Mammary epithelial cell (primary cell): ENCODE measurements at regions of chr18 and their contacts with region 1.

Region 1: DNA sequence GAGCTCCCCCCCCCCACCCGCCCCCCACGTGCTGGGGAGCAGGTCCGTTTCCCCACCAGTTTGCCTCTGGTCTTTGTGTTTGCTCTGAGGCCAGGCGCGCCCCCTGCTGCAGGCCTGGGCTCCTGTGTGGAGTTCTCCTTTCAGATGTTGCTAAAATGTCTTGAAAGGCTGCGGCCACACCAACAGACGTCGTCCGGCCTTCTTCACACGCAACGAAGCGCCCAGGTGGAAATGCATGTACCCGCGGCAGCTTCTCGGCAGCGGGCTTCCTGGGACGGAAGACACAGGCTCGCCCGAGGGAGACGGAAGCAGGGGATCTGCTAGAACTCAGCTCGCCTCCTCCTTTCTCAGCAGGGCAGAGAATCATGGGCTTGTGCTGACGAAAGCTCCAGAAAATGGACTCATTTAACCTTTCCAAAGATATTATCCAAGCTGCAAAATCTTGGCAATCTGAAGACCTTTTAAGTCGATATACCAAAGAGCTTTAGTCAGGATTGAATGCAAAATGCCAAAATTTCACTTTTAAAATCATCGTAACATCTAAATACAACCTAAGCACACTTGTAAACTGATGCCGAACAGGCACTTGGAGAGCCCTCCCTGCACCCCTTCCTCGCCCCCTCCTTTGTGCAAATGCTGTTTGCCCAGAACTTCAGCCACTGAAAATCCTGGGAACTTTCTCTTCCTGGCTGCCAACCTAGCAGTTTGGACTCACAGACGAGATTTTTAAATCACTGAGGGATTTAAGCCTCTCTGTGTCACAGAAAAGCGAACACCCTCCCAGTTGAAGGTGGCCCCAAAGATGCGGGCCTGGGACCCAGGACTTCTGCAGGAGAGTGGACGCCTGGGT is 125.5 kb upstream of the ZNF516 start:
- DNase-seq: peak; percentile 74
- H3K4me3 ChIP-seq: peak overlapping the region in 2 of 3 experiments; percentile 36
- H3K27ac ChIP-seq: peak overlapping the region; percentile 61
- H3K4me1 ChIP-seq: peaks cover 41% of the 10 kb centered on the region
- H3K27me3 ChIP-seq: no peaks in the 10 kb centered on the region
- CTCF ChIP-seq: peak; percentile 46 to 78

Region 2: DNA sequence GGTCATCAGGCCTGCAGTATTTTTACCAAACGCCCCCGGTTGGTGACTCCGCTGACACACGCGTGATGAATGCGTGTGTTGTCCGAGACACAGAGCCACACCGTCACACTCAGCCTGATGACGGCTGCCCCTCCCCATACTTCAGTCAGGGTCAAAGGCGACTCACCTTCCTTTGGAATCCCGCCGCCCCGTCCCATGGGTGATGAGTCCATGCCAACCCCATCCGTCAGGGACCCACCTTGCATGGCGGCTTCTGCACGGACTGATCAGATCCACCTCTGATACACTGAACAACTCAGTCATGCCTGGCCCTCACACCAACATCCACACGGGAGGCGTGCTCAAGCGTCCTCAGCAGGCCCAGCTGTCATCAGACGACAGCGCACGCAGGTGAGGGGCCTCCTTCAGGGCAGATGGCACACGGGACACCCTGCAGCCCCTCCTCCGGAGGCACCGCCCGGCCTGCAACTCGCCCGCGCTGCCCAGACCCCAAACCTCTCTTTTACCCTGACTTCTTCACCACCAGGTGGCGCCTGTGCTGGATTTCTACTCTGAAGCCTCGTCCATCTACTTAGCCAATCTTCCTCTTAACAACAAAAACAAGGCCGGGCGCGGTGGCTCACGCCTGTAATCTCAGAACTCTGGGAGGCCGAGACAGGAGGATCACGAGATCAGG is 214.7 kb before region 1 on chr18:
- CTCF ChIA-PET with region 1: no interaction called
- dilution Hi-C with region 1: no loop called
- in situ Hi-C with region 1: no loop called
- intact Hi-C with region 1: loop called (anchors 1 kb)
- DNase-seq: peak; percentile 27
- H3K4me3 ChIP-seq: no peak overlapping the region
- H3K27ac ChIP-seq: no peak overlapping the region
- H3K4me1 ChIP-seq: no peaks in the 10 kb centered on the region
- H3K27me3 ChIP-seq: no peaks in the 10 kb centered on the region
- CTCF ChIP-seq: peak; percentile 46 to 67

Region 3: GRCh38 chr18:76492669-76493212 is 127.8 kb before region 1 on chr18:
- CTCF ChIA-PET with region 1: no interaction called
- dilution Hi-C with region 1: loop called (anchors 5 kb)
- in situ Hi-C with region 1: loop called in 1 of 2 experiments (anchors 25 kb)
- intact Hi-C with region 1: loop called (anchors 1 kb)
- DNase-seq: peak; percentile 98
- H3K4me3 ChIP-seq: peak overlapping the region; percentile 83 to 94 (median 92)
- H3K27ac ChIP-seq: peak overlapping the region; percentile 77
- H3K4me1 ChIP-seq: peaks cover 20% of the 10 kb centered on the region
- H3K27me3 ChIP-seq: no peaks in the 10 kb centered on the region
- CTCF ChIP-seq: no peak

Region 4: DNA sequence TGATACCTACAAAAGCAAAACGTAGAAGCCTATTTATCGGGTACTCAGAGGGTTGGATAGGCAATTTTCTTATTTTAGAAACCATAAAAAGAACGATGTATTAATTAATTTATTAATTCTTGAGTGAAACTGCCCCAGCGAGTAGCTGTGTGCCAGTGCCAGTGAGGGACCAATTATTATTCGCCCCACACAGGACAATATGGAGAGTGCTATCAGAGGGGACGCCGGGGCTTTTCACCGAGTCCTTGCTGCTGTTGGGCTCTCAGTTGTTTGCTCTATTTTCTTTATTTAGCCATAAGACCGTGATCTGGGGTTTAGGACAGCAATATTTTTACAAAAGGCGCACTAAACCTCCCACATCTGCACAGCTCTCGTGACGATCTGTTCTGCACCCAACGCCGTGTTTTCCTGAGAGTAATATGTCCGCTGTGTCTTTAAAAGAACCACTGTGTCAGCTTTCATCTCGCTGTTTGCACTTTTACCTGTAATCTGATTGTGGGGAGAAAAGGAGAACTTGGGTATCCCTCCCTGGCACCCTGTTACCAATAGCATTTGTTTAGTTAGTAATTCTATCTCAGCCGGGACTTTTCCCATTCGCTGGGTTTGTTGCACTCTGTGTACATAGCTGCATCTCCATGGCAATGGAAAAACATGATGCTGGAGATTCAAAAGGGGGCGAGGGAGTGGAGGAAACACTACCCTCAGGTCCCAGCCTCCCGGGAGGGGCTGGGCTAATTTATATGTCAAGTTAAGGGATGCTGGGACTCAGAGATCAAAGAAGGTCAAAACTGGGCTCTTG is 95.4 kb before region 1 on chr18:
- CTCF ChIA-PET with region 1: no interaction called
- dilution Hi-C with region 1: no loop called
- in situ Hi-C with region 1: no loop called
- intact Hi-C with region 1: no loop called
- DNase-seq: peak; percentile 37
- H3K4me3 ChIP-seq: peak overlapping the region; percentile 35 to 56 (median 52)
- H3K27ac ChIP-seq: peak overlapping the region; percentile 49
- H3K4me1 ChIP-seq: peaks cover 11% of the 10 kb centered on the region
- H3K27me3 ChIP-seq: no peaks in the 10 kb centered on the region
- CTCF ChIP-seq: no peak

Region 5: DNA sequence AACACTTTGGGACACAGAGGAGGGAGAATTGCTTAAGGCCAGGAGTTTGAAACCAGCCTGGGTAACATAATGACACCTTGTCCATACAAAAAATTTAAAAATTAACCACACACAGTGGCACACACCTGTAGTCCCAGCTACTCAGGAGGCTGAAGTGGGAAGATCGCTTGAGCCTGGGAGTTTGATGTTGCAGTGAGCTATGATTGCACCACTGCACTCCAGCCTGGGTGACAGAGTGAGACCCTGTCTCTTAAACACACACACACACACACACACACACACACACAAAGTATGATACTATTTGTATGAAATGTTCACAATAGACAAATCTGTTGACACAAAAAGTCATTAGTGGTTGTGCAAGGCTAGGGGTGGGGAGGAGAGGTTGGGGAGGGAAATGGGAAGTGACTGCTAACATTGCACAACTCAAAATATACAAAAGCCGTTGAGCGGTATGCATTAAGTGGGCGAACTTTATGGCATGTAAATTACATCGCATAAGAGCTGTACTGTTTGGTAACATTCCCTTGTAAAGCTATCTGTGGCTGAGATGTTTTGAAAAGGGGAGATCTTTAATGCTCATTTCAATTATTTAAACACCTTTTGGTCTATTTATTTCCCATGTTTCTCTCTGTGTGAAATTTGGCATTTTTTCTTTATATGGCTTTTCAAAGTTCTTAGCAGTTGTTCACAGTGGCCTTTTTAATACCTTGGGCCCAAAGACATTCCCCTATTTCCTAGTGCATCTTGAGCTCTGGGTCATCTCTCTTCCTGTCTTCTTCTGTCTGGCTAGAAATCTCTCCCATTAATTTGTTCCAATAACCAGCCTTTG is 66.6 kb before region 1 on chr18:
- CTCF ChIA-PET with region 1: no interaction called
- dilution Hi-C with region 1: no loop called
- in situ Hi-C with region 1: no loop called
- intact Hi-C with region 1: no loop called
- DNase-seq: peak; percentile 42
- H3K4me3 ChIP-seq: no peak overlapping the region
- H3K27ac ChIP-seq: no peak overlapping the region
- H3K4me1 ChIP-seq: peaks cover 3% of the 10 kb centered on the region
- H3K27me3 ChIP-seq: no peaks in the 10 kb centered on the region
- CTCF ChIP-seq: no peak

Region 6: GRCh38 chr18:76573325-76574025 is 47.1 kb before region 1 on chr18:
- CTCF ChIA-PET with region 1: no interaction called
- dilution Hi-C with region 1: loop called (anchors 5 kb)
- in situ Hi-C with region 1: no loop called
- intact Hi-C with region 1: no loop called
- DNase-seq: peak; percentile 87
- H3K4me3 ChIP-seq: no peak overlapping the region
- H3K27ac ChIP-seq: peak overlapping the region; percentile 46
- H3K4me1 ChIP-seq: peaks cover 12% of the 10 kb centered on the region
- H3K27me3 ChIP-seq: no peaks in the 10 kb centered on the region
- CTCF ChIP-seq: no peak

Region 7: GRCh38 chr18:76709659-76710645 is 89.4 kb after region 1 on chr18:
- CTCF ChIA-PET with region 1: no interaction called
- dilution Hi-C with region 1: no loop called
- in situ Hi-C with region 1: no loop called
- intact Hi-C with region 1: loop called (anchors 2 kb)
- DNase-seq: peak; percentile 36
- H3K4me3 ChIP-seq: no peak overlapping the region
- H3K27ac ChIP-seq: no peak overlapping the region
- H3K4me1 ChIP-seq: no peaks in the 10 kb centered on the region
- H3K27me3 ChIP-seq: no peaks in the 10 kb centered on the region
- CTCF ChIP-seq: peak; percentile 86 to 91

Region 8: DNA sequence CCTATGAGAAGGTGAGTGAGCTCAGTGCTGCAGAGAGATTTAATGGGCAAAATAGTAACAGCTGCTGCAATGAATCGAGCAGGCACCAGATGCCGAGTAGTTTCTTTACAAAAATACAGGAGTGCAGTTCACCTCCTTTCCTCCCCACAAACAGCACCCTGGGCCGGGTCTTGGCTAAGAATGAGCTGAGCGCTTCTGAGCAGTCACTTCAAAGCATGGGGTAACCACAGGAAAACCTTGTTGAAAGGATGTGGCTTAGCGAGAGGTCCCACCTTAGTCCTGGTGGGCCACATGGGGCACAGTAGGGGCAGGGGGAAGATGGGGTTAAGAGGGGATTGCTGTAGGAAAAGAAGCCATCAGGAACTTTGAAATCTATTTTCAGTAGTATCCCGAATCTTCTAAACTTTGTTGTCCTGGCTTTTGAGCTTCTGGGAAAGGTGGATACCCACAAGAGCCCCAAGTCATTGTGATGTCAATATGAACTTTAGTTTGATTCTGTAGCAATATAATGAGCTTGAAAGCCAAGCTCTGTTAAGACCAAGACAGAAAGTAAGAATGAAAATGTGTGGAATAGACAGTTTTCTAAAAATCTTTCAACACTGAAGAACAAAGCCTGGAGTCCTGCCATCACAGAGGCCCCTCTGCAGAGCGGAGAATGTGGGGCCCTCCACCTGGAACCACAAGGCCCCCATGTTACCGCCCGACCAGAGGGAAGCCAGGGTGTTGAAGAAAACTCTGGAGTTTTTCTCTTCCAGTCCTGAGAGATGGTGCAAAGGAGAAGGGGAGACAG is 100.9 kb after region 1 on chr18:
- CTCF ChIA-PET with region 1: no interaction called
- dilution Hi-C with region 1: no loop called
- in situ Hi-C with region 1: no loop called
- intact Hi-C with region 1: no loop called
- DNase-seq: no peak
- H3K4me3 ChIP-seq: no peak overlapping the region
- H3K27ac ChIP-seq: no peak overlapping the region
- H3K4me1 ChIP-seq: no peaks in the 10 kb centered on the region
- H3K27me3 ChIP-seq: no peaks in the 10 kb centered on the region
- CTCF ChIP-seq: no peak